Endothelial cell of umbilical vein (primary cell): ENCODE measurements at regions of chr17 and their contacts with region 1.

Region 1: DNA sequence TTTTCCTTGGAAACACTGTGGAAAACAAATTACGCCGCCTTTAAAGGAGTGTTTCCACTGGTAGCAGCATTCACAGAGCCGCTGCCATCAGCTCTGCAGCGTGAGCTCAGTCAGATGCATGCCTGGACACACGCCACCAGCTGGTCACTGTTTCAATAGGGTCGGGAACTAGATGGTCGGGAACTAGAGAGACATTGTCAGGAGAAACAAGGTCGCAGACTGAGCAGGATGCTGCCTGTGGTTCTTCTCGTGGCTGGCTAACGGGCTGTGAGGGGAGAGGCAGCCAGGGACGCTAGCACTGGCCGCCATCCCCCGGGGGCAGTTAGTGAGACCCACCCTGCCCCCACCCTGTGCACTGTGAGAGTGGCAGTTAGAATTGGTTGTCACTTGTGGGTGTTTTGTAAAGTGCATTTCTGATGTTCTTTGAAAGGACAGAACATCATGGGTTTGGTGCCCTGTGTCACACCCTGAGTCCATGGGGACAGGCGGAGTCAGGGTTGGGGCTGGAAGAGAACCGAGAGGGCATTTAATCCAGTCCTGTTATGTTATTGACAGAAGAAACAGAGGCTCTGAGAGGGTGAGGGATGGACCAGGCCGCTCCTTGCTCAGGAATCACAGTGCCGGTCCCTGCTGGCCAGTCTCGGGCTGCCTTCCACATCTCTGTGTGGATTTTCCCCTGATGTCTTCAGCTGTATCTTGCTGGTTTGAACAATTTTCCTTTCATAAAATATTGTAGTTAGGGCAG is 86.3 kb downstream of the SPECC1 start:
- DNase-seq: peak; percentile 27
- H3K4me3 ChIP-seq: no peak overlapping the region
- H3K27ac ChIP-seq: no peak overlapping the region
- H3K4me1 ChIP-seq: no peaks in the 10 kb centered on the region
- H3K27me3 ChIP-seq: peaks cover 2 to 8% of the 10 kb centered on the region in 2 experiments
- CTCF ChIP-seq: peak in 1 of 2 donors; percentile 33
- POLR2A ChIP-seq: no peak

Region 2: DNA sequence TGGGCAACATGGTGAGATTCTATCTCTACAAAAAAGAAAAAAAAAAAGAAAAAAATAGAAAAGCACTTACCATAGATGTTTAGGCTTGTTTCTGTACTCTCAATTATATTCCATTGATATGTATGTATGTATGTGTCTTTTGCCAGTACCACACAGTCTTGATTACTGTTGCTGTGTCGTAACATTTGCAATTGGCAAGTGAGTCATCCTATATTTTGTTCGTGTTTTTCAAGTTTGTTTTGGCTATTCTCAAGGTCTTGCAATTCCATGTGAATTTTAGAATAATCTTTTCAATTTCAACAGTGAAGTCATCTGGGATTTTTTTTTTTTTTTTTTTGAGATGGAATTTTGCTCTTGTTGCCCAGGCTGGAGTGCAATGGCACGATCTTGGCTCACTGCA is 67.1 kb before region 1 on chr17:
- CTCF ChIA-PET with region 1: no interaction called
- POLR2A ChIA-PET with region 1: no interaction called
- dilution Hi-C with region 1: no loop called
- intact Hi-C with region 1: no loop called
- DNase-seq: no peak
- H3K4me3 ChIP-seq: no peak overlapping the region
- H3K27ac ChIP-seq: no peak overlapping the region
- H3K4me1 ChIP-seq: no peaks in the 10 kb centered on the region
- H3K27me3 ChIP-seq: peaks cover 0 to 2% of the 10 kb centered on the region in 2 experiments
- CTCF ChIP-seq: no peak
- POLR2A ChIP-seq: no peak

Region 3: DNA sequence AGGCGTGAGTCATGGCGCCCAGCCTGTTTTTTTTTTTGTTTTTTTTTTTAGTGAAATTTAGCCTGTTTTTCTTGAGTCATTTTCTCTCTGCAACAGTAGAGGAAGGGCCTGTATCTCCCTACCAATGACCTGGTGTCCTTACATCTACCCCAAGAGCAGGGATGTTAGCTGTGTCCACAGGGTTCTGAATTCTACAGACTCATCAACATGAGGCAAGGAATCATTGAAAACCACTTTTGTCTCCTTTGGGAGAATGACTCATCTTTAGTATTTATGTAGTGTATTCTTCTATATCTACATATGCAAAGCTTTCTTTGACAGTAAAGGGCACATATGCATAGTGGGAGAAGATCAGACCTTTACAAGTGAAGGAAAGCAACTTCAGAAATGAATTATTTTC is 19.0 kb after region 1 on chr17:
- CTCF ChIA-PET with region 1: no interaction called
- POLR2A ChIA-PET with region 1: no interaction called
- dilution Hi-C with region 1: no loop called
- intact Hi-C with region 1: loop called (anchors 1 kb)
- DNase-seq: no peak
- H3K4me3 ChIP-seq: no peak overlapping the region
- H3K27ac ChIP-seq: no peak overlapping the region
- H3K4me1 ChIP-seq: no peaks in the 10 kb centered on the region
- H3K27me3 ChIP-seq: peaks cover 0 to 7% of the 10 kb centered on the region in 2 experiments
- CTCF ChIP-seq: no peak
- POLR2A ChIP-seq: no peak